Activated T-helper 1 cell treated with anti-CD3 and anti-CD28 coated beads, Interleukin-12 subunit alpha, Interleukin-12 subunit beta, Interleukin-2, Interleukin-4 antibody, amounts not matched to agents 30 ng/mL and 10 ng/mL and 1 ng/mL, durations not matched to agents 14 hours and 24 hours and 36 hours (primary cell): ENCODE measurements at regions of chr16 and their contacts with region 1.

Region 1: DNA sequence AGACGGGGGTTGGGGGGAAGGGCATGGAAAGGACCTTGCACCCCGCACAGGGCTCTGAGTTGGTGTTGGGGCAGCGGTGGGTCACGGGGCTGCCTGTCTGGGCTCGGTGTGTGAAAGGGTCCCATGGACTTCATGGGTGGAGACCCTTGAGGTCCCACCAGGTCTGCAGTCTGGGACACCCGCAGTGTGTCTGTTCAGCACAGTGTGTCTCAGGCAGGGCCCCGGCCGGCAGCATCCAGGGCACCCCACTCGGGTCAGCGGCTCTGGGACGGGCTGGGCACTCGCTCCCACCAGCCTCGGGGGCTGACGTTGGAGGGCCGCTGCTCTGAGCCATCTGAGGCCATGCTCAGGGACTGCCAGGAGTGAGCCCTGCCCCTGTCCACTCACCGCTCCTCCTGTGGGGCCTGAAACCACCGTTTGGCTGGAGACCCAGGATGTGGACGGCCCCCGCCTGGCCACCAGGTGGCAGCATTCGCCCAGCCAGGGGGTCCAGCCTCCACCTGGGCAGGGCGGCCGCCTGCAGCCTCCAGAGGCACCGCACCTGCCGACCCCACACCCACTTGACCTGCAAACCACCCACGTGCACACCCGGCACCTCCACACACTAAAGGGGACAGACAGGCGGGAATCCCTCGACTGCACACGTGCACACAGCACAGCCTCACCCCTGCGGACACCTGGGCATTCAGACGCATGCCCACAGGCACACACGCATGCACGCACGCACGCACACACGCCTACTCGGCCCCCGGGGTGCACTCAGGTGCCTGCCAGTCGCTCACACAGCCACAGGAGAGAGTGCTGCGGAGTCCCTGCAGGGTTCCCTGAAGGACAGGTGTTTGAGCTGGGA is 10.1 kb upstream of the ZFPM1 start:
- DNase-seq: peak; percentile 70
- H3K4me3 Mint-ChIP-seq: no peak overlapping the region
- H3K27ac Mint-ChIP-seq: no peak overlapping the region
- H3K4me1 Mint-ChIP-seq: no peaks in the 10 kb centered on the region
- H3K27me3 Mint-ChIP-seq: peaks cover 3% of the 10 kb centered on the region

Region 2: DNA sequence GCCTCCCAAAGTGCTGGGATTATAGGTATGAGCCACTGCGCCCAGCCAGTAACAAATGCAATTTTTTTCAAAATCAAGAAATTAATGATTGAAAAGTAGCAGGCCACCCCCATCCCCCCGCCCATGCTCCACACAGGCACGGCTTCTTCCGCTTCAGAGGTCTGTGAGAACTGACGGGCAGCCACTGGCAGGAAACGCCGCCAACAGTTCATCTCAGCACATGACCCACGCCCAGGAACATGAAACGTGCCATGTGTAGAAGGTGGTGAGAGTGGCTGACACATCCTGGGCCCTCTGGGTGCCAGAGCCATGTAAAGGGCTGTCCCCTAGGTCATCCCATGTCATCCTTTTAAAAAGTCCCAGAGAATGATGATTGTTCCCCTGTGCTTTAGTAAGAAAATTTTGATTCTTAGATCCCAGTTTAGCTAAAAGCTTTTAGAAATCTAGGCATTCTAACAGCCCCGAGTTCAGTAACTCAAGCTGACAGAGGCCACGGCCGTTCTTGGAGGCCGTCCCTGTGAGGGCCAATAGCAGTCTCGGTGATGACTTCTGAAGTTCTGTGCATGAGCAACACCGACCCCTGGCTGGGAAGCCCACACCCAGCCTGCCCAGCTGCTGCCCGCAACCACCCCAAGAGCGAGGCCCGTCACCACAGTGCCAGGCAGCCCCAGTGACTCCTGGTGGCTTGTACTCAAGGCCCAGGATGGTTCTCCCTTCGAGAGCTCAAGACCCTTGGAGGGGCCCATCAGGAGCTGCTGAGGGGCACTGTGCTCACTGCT is 729.3 kb before region 1 on chr16:
- intact Hi-C with region 1: no loop called
- DNase-seq: no peak
- H3K4me3 Mint-ChIP-seq: no peak overlapping the region
- H3K27ac Mint-ChIP-seq: peak overlapping the region; percentile 67
- H3K4me1 Mint-ChIP-seq: peaks cover 3% of the 10 kb centered on the region
- H3K27me3 Mint-ChIP-seq: no peaks in the 10 kb centered on the region

Region 3: DNA sequence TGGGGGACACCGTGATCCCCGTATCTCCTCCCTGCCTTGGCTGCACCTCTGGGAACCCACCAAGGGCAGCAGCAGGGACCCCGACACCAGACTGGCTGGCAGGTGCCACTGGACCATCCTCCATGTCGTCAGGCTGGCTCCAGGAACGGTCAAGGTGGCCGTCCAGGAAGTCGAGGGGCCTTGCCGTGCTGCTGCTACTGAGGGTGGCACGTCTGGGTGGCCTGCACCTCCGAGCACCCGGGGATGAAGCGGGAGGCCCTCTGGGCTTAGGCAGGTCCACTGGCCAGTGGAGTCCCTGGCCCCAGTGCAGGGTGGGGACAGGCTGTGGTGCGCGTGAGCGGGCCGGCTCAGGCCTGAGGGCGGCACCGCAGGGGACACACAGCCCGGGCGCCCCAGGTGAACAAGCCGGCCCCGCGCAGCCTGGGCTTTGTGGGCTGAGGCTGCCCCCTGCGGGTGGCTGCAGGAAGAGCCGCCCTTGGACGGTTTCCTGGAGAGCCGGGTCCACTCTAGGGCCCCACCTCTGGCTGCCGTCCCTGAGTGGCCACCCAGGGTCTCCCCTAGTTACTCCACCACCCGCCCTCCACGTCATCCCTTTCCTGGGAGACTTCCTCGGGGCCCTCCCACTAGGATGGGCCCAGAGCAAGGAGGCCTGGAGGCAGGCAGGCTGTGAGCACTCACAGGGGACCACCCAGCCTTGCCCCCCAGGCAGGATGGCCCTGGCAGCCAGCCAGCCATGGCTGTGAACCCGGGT is 84.4 kb after region 1 on chr16:
- intact Hi-C with region 1: loop called (anchors 1 kb)
- DNase-seq: peak; percentile 37
- H3K4me3 Mint-ChIP-seq: no peak overlapping the region
- H3K27ac Mint-ChIP-seq: no peak overlapping the region
- H3K4me1 Mint-ChIP-seq: no peaks in the 10 kb centered on the region
- H3K27me3 Mint-ChIP-seq: no peaks in the 10 kb centered on the region

Region 4: GRCh38 chr16:88533932-88534732 is 91.2 kb after region 1 on chr16:
- intact Hi-C with region 1: loop called (anchors 2 kb)
- DNase-seq: peak; percentile 79
- H3K4me3 Mint-ChIP-seq: no peak overlapping the region
- H3K27ac Mint-ChIP-seq: no peak overlapping the region
- H3K4me1 Mint-ChIP-seq: no peaks in the 10 kb centered on the region
- H3K27me3 Mint-ChIP-seq: no peaks in the 10 kb centered on the region

Region 5: GRCh38 chr16:88561485-88562369 is 118.8 kb after region 1 on chr16:
- intact Hi-C with region 1: loop called (anchors 1 kb)
- DNase-seq: peak; percentile 25
- H3K4me3 Mint-ChIP-seq: no peak overlapping the region
- H3K27ac Mint-ChIP-seq: no peak overlapping the region
- H3K4me1 Mint-ChIP-seq: peaks cover 16% of the 10 kb centered on the region
- H3K27me3 Mint-ChIP-seq: peaks cover 2% of the 10 kb centered on the region